Naive thymus-derived CD4-positive, alpha-beta T cell (primary cell): ENCODE measurements at regions of chr4 and their contacts with region 1.

Region 1: DNA sequence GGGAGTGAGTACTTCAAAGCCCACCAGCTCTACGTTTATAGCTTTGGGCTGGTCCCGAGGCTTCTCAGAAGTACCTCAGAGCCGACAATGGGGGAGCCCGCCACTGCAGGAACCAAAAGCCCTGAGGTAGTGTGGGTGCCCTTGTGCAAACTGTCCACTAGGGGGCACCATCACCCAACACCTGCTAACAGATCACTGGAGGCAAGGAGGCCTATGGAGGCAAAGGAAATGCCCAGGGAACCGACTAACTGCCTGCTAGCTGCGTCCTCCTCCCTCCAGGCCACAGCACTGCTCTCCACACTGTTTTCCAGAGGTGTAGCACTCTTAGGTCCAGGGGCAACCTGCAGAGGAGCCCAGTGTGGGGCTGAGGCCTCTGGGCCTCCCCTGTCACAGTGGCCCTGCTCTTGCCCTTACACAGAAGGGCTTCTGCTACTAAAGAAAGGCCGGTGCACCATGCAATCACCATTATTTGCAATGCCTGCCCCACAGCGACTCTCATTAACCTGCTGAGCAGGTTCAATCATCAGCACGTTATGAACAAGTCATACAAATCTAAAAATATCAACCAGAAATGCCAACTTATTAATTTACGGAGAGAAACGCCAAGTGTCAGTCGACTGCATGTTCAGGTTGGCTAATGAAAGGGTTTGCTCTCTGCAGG is 159.1 kb downstream of the NSUN7 start:
- DNase-seq: peak; percentile 18 to 73 (median 35)
- ATAC-seq: peak; percentile 85
- H3K4me3 ChIP-seq: no peak overlapping the region
- H3K4me3 Mint-ChIP-seq: no peak overlapping the region
- H3K27ac ChIP-seq: no peak overlapping the region
- H3K27ac Mint-ChIP-seq: peak overlapping the region in 2 of 9 donors; percentile 16 to 30
- H3K4me1 ChIP-seq: no peaks in the 10 kb centered on the region
- H3K4me1 Mint-ChIP-seq: peaks cover 6 to 16% (median 13%) of the 10 kb centered on the region in 7 donors
- H3K27me3 ChIP-seq: no peaks in the 10 kb centered on the region
- H3K27me3 Mint-ChIP-seq: no peaks in the 10 kb centered on the region

Region 2: DNA sequence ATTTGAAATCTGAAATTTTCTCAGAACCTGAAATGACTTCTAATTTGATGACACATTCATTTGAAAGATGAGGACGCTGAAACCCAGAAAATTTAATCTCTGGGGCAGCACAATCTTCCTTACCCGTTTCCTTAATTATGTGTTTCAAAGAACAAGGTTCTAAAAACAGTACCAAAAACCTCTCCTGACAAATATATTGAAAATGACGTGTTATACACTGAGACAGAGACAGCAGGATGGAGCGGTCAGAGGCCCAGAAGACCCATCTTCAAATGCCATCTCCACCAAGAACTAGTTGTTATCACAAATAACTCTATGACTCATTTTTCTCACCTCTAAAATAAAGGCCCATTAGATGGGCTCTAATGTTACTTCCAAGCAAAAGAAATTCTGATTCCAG is 18.2 kb after region 1 on chr4:
- CTCF ChIA-PET with region 1: no interaction called
- POLR2A ChIA-PET with region 1: no interaction called
- intact Hi-C with region 1: loop called in 1 of 2 experiments (anchors 1 kb)
- DNase-seq: no peak
- ATAC-seq: no peak
- H3K4me3 ChIP-seq: no peak overlapping the region
- H3K4me3 Mint-ChIP-seq: no peak overlapping the region
- H3K27ac ChIP-seq: no peak overlapping the region
- H3K27ac Mint-ChIP-seq: no peak overlapping the region
- H3K4me1 ChIP-seq: no peaks in the 10 kb centered on the region
- H3K4me1 Mint-ChIP-seq: peaks cover 0 to 6% (median 3%) of the 10 kb centered on the region in 7 donors
- H3K27me3 ChIP-seq: peaks cover 0 to 5% of the 10 kb centered on the region in 2 donors
- H3K27me3 Mint-ChIP-seq: peaks cover 6 to 24% (median 20%) of the 10 kb centered on the region in 5 donors

Region 3: DNA sequence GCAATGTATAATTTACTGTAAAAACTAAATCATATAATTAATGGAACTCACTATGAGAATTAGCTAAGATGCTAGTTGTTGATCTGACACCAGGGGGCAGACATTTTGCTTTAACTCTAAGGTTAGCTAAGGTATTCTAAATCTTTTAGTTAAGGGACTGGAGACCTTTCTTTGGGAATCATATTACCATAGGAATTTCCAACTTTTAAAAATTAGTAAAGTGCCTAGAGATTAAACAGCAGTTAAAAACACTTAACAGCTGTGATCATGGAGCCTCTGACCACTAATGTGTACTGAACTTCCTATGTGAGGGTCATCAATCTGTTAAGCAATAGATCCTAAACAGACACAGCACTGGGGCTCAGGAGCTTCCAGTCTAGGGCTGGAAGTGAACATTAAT is 67.5 kb after region 1 on chr4:
- CTCF ChIA-PET with region 1: no interaction called
- POLR2A ChIA-PET with region 1: no interaction called
- intact Hi-C with region 1: no loop called
- DNase-seq: no peak
- ATAC-seq: no peak
- H3K4me3 ChIP-seq: no peak overlapping the region
- H3K4me3 Mint-ChIP-seq: no peak overlapping the region
- H3K27ac ChIP-seq: no peak overlapping the region
- H3K27ac Mint-ChIP-seq: no peak overlapping the region
- H3K4me1 ChIP-seq: no peaks in the 10 kb centered on the region
- H3K4me1 Mint-ChIP-seq: no peaks in the 10 kb centered on the region
- H3K27me3 ChIP-seq: no peaks in the 10 kb centered on the region
- H3K27me3 Mint-ChIP-seq: peaks cover 2 to 25% (median 14%) of the 10 kb centered on the region in 5 donors

Region 4: GRCh38 chr4:41963105-41963504 is 1054.3 kb after region 1 on chr4:
- CTCF ChIA-PET with region 1: no interaction called
- POLR2A ChIA-PET with region 1: no interaction called
- intact Hi-C with region 1: no loop called
- DNase-seq: peak in 3 of 9 donors; percentile 5 to 13 (median 7)
- ATAC-seq: no peak
- H3K4me3 ChIP-seq: no peak overlapping the region
- H3K4me3 Mint-ChIP-seq: no peak overlapping the region
- H3K27ac ChIP-seq: no peak overlapping the region
- H3K27ac Mint-ChIP-seq: no peak overlapping the region
- H3K4me1 ChIP-seq: no peaks in the 10 kb centered on the region
- H3K4me1 Mint-ChIP-seq: no peaks in the 10 kb centered on the region
- H3K27me3 ChIP-seq: no peaks in the 10 kb centered on the region
- H3K27me3 Mint-ChIP-seq: no peaks in the 10 kb centered on the region